Body of pancreas (tissue), 4 donors: ENCODE measurements at regions of chr12 and their contacts with region 1.

Region 1: DNA sequence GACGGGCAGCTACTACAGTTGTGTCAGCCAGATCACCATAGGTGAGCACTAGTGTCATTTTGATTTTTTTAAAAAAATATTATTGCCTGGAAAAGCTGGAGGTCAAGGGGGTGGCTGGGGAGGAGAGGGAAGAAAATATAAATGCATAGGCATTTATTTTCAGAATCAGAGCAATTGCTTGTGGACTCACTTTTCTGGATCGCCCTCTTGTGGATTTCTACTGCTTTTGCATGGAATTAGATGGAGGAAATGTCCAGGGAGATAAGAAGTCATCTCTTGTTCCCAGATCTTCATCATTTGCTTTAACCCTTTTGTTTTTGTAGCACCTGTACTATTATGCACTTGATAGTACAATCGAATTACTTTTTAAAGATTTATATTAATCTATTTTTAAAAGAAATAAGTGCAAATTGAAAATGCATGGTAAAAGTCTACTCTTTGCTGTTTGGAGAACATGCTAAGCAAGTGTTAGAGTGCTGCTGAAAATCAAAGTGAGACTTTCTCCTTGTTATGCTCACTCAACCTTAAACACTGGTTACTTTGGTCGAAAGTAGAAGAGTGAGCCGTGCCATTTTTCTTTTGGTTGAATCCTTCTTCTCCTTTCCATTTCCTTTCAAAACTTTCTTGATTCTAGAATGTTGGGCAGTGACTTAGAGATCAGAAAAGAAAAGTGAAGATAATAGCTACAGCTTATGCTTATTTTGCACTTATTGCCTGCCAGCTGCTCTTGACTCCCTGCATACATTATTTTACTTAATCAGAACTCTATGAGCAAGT is 60.6 kb upstream of the ANO4 start:
- DNase-seq: no peak
- ATAC-seq: no peak
- H3K4me3 ChIP-seq: no peak overlapping the region
- H3K27ac ChIP-seq: no peak overlapping the region
- H3K4me1 ChIP-seq: no peaks in the 10 kb centered on the region
- H3K27me3 ChIP-seq: no peaks in the 10 kb centered on the region
- CTCF ChIP-seq: peak; percentile 32 to 58 (median 50)
- POLR2A ChIP-seq: no peak

Region 2: DNA sequence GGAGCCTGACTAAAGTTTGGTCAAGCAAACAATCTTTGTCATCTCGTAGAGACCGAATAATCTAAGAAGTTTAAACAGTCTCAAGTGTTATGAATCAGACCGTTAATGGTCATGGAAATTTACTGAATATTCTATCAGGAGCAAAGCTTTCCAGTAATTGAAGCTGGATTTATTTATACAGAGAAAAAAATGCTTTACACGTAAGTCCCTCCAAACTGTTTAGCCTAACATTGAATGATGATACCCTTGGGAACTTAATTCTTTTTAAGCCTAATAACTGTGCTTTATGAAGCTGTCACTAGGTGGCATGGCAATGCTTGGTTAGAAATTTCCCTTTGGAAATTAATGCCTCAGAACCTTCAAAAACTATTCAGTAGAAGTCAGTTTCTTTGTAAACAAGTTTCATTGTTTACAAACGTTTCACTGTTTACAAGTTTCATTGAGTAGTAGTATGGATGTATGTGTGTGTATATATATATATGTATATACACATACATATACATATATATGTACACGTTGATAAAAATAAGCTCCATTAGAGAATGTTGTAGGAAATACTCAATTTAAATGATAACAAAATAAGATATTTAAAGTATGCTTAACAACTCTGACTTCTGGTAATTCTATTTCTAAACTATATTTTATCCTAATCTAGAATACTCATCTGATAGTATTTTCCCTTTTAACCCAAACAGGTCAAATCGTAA is 499.3 kb before region 1 on chr12:
- intact Hi-C with region 1: loop called (anchors 10 kb)
- DNase-seq: peak in 1 of 4 donors; percentile 22
- ATAC-seq: peak; percentile 58
- H3K4me3 ChIP-seq: no peak overlapping the region
- H3K27ac ChIP-seq: no peak overlapping the region
- H3K4me1 ChIP-seq: no peaks in the 10 kb centered on the region
- H3K27me3 ChIP-seq: no peaks in the 10 kb centered on the region
- CTCF ChIP-seq: peak; percentile 56 to 87 (median 81)
- POLR2A ChIP-seq: no peak

Region 3: DNA sequence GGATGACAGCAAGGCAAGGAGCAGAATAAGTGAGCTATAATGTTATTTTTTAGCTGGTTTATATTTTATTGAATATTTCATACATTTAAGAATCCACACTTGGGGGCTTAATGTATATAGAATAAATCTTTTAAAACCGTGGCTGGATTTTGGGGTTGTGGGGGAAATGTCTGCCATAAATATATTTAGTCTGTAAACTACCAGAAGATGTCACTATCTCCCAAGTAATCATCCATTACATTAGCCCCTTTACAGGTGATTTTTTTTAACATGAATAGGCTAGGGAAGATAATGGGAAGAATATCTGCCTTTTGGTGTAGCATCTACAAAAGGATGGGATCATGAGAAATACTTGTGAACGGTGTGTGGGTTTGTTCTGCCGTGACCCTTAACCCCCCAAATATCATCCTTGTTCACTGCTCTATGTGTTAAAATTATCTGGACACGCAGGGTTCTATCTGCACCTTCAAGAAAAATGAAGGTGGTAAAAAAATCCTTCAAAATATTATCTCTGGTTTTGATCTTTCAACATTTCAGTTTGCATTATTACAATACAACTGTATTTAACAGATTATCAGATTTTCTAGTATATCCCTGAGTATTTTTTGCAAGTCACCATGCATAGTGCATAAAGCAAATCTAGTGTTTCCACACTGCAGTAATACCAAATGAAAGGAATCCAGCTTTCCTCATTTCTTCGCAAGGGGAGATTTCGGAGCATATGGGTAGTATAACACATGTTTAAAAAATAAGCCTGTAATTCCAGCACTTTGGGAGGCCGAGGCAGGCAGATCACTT is 385.1 kb before region 1 on chr12:
- intact Hi-C with region 1: loop called (anchors 10 kb)
- DNase-seq: no peak
- ATAC-seq: no peak
- H3K4me3 ChIP-seq: no peak overlapping the region
- H3K27ac ChIP-seq: no peak overlapping the region
- H3K4me1 ChIP-seq: peaks cover 8% of the 10 kb centered on the region
- H3K27me3 ChIP-seq: no peaks in the 10 kb centered on the region
- CTCF ChIP-seq: peak in 6 of 7 experiments; percentile 10 to 49 (median 40)
- POLR2A ChIP-seq: no peak